PC-9 (cell line): ENCODE measurements at regions of chr9 and their contacts with region 1.

Region 1: GRCh38 chr9:136902259-136902821 is 16.0 kb downstream of the TRAF2 start:
- DNase-seq: peak; percentile 84 to 87
- H3K4me3 ChIP-seq: peak overlapping the region; percentile 44; the same call in 1 of the 2 replicates
- H3K27ac ChIP-seq: peak overlapping the region; percentile 99
- H3K4me1 ChIP-seq: peaks cover 44% of the 10 kb centered on the region
- H3K27me3 ChIP-seq: no peaks in the 10 kb centered on the region
- CTCF ChIP-seq: no peak; the same call in 1 of the 2 replicates

Region 2: GRCh38 chr9:136865735-136866103 is 36.6 kb before region 1 on chr9:
- CTCF ChIA-PET with region 1: no interaction called
- POLR2A ChIA-PET with region 1: interaction called, 4 read pairs
- intact Hi-C with region 1: loop called (anchors 5 kb)
- DNase-seq: no peak
- H3K4me3 ChIP-seq: peak overlapping the region; percentile 98
- H3K27ac ChIP-seq: peak overlapping the region; percentile 54; the same call in 1 of the 2 replicates
- H3K4me1 ChIP-seq: peaks cover 16% of the 10 kb centered on the region
- H3K27me3 ChIP-seq: no peaks in the 10 kb centered on the region
- CTCF ChIP-seq: no peak

Region 3: DNA sequence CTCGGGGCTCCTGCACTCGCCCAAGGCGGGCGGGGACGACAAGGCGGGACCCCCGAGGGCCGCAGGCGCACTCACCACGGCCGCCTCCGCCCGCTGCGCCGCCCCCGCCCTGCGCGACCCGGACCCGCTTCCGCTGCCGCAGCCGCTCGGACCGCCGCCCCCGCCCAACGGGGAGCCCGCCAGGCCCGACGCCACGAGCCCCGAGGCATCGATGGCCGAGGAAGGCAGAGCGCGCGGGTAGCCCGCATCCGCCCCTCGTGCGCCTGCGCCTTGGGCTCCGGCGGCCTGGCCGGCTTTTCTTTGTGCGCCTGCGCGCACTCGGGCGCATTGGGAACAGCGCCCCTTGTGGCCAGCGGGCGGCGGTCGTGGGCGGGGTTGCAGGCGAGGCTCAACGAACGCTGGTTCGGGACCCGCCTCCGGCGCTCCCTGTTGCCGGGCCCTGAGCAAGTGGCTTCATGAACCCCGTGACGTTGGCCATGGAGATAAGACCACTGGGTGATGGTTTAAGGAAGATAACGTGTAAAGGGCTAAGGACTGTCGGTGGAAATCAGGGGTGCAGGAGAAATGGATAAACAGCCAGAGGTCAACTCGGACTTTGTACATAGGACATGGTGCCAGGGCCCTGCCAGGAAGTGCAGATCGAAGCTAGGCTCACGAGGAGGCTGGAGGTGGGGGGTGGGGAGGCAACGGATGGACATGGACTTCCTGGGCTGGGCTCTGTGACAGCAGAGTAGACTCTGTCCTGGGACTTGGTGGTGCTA is 42.4 kb after region 1 on chr9 and contains the starts of genes C8G and FBXW5:
- CTCF ChIA-PET with region 1: no interaction called
- POLR2A ChIA-PET with region 1: interaction called, 3 read pairs
- intact Hi-C with region 1: loop called (anchors 1 kb)
- DNase-seq: peak; percentile 75 to 98
- H3K4me3 ChIP-seq: peak within 1 kb of the TSS; percentile 87
- H3K27ac ChIP-seq: peak within 1 kb of the TSS; percentile 26; the same call in 1 of the 2 replicates
- H3K4me1 ChIP-seq: peaks cover 21% of the 10 kb centered on the region
- H3K27me3 ChIP-seq: no peaks in the 10 kb centered on the region
- CTCF ChIP-seq: peak; percentile 93
- total RNA-seq, gene C8G: 2.3 and 4.4 TPM in 2 replicates
- total RNA-seq, gene FBXW5: 101 and 125 TPM in 2 replicates